ENCODE measurements at regions of chr19 and their contacts with region 1.

Region 1: DNA sequence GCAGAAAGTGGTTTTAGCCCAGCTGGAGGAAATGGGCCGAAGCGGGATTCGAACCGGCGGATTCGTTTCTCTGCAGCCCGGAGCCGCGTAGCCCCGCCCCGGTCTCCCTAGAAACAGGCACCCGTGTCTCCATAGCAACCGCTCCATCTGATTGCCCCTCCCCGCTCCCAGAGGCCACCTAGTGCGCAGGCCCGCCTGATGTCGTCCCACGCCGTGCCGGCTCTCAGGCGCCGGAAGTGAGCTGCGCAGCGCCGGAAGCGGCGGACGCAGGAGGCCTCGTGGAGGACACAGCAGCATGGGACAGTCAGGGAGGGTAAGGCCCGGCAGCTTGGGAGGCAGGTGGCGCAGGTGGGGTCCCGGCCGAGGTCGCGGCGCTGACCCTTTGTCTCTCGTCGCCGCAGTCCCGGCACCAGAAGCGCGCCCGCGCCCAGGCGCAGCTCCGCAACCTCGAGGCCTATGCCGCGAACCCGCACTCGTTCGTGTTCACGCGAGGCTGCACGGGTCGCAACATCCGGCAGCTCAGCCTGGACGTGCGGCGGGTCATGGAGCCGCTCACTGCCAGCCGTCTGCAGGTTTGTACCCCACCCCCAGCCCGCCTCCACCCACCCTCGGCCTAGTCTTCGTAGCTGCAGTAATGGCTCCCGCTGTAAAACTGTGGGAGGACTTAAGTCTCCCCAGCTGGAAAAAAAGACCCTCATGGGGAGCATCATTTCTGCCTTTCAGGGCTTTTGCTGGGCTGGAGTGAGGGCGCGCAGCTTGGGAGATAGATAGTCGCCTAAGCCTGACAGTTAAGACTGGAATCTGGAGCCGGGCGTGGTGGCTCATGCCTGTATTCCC is at the start of gene PPAN:
- DNase-seq: peak; percentile 99
- H3K4me3 Mint-ChIP-seq: peak within 1 kb of the TSS; percentile 80
- H3K27ac Mint-ChIP-seq: peak within 1 kb of the TSS; percentile 100
- H3K4me1 Mint-ChIP-seq: peaks cover 69% of the 10 kb centered on the region
- H3K27me3 Mint-ChIP-seq: no peaks in the 10 kb centered on the region
- total RNA-seq, gene PPAN: 59.7 to 60.0 TPM

Region 2: GRCh38 chr19:9435279-9436268 is 670.7 kb before region 1 on chr19 and contains the start of gene ZNF266:
- CTCF ChIA-PET with region 1: no interaction called
- intact Hi-C with region 1: loop called (anchors 10 kb)
- DNase-seq: peak; percentile 96
- H3K4me3 Mint-ChIP-seq: peak within 1 kb of the TSS; percentile 90
- H3K27ac Mint-ChIP-seq: peak within 1 kb of the TSS; percentile 99
- H3K4me1 Mint-ChIP-seq: peaks cover 20% of the 10 kb centered on the region
- H3K27me3 Mint-ChIP-seq: no peaks in the 10 kb centered on the region
- total RNA-seq, gene ZNF266: 19.7 to 21.9 TPM

Region 3: GRCh38 chr19:10085641-10086590 is 20.4 kb before region 1 on chr19 and contains the start of gene SHFL:
- CTCF ChIA-PET with region 1: interaction called, 3 read pairs
- intact Hi-C with region 1: loop called (anchors 1 kb)
- DNase-seq: peak; percentile 80
- H3K4me3 Mint-ChIP-seq: peak within 1 kb of the TSS; percentile 80
- H3K27ac Mint-ChIP-seq: peak within 1 kb of the TSS; percentile 77
- H3K4me1 Mint-ChIP-seq: peaks cover 8% of the 10 kb centered on the region
- H3K27me3 Mint-ChIP-seq: no peaks in the 10 kb centered on the region
- total RNA-seq, gene SHFL: 28.3 to 31.9 TPM

Region 4: GRCh38 chr19:10120538-10121189 is 14.3 kb after region 1 on chr19:
- CTCF ChIA-PET with region 1: interaction called, 20 read pairs
- intact Hi-C with region 1: loop called (anchors 1 kb)
- DNase-seq: no peak
- H3K4me3 Mint-ChIP-seq: no peak overlapping the region
- H3K27ac Mint-ChIP-seq: no peak overlapping the region
- H3K4me1 Mint-ChIP-seq: peaks cover 19% of the 10 kb centered on the region
- H3K27me3 Mint-ChIP-seq: no peaks in the 10 kb centered on the region

Region 5: DNA sequence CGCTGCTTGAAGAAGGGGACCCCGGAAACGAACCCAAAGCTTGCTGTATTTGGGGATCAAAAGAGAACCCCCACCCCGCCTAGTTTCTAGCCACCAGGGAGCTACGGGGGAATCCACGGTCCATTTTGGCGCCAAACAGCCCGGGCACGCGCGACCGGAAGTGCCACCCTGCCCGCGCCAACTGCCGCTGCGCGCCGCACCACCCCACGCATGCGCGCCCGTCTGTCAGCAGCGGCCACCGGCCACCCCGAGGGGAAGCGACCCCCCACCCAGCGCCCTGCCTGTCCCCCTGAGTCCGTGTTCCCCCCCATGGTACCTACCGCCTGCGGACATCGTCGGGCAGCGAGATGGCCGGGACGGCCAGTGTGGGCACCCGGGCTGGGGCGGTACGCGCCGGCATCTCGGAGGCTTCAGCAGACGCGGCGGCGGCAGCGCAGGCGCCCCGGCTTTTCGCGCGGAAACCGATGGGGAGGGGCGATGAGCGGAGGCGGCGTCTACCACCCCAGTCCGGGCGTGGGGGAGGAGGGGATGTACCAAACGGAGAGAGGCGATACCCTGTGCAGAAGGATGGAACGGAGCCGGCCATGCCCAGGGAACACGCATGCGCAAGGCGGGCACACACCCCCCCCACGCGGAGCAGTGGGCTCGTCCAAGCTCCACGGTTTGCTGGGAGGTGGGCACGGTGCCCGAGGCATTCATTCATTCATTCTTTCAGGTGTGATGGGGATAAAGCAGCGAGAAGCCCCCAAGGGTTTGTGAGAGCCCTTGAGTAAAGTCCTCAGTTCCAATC is 88.4 kb after region 1 on chr19 and contains the start of gene DNMT1:
- CTCF ChIA-PET with region 1: interaction called, 3 read pairs
- intact Hi-C with region 1: loop called (anchors 1 kb)
- DNase-seq: peak; percentile 99
- H3K4me3 Mint-ChIP-seq: peak within 1 kb of the TSS; percentile 99
- H3K27ac Mint-ChIP-seq: peak within 1 kb of the TSS; percentile 98
- H3K4me1 Mint-ChIP-seq: peaks cover 46% of the 10 kb centered on the region
- H3K27me3 Mint-ChIP-seq: no peaks in the 10 kb centered on the region
- total RNA-seq, gene DNMT1: 365 to 371 TPM

Region 6: GRCh38 chr19:10251792-10252694 is 145.7 kb after region 1 on chr19 and contains the start of gene MRPL4:
- CTCF ChIA-PET with region 1: no interaction called
- intact Hi-C with region 1: loop called (anchors 2 kb)
- DNase-seq: peak; percentile 98
- H3K4me3 Mint-ChIP-seq: peak within 1 kb of the TSS; percentile 97
- H3K27ac Mint-ChIP-seq: peak within 1 kb of the TSS; percentile 95
- H3K4me1 Mint-ChIP-seq: peaks cover 34% of the 10 kb centered on the region
- H3K27me3 Mint-ChIP-seq: no peaks in the 10 kb centered on the region
- total RNA-seq, gene MRPL4: 115 to 116 TPM

Region 7: GRCh38 chr19:10416380-10417257 is 310.3 kb after region 1 on chr19:
- CTCF ChIA-PET with region 1: no interaction called
- intact Hi-C with region 1: loop called (anchors 10 kb)
- DNase-seq: peak; percentile 94
- H3K4me3 Mint-ChIP-seq: peak overlapping the region; percentile 75
- H3K27ac Mint-ChIP-seq: peak overlapping the region; percentile 82
- H3K4me1 Mint-ChIP-seq: peaks cover 53% of the 10 kb centered on the region
- H3K27me3 Mint-ChIP-seq: peaks cover 40% of the 10 kb centered on the region

Measured in activated naive CD4-positive, alpha-beta T cell treated with anti-CD3 and anti-CD28 coated beads for 36 hours (primary cell).